Cardiac septum (tissue), 1 donor: ENCODE measurements at regions of chr7 and their contacts with region 1.

Region 1: DNA sequence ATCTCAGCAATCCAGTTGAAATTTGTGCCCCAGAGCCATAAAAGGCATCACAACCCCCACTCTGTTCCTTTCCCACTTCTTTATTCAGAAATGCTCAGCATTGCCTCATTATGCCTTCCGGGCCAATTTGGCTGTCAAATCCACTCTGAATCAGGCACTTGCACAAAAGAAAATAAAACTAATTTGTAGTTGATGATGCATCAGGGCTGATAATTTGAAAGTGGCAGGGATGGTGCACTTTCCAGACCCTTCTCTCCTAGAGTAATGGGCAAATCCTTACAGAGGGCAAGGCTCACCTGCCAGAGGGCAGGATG is 147.9 kb upstream of the PDE1C start:
- DNase-seq: peak; percentile 31

Region 2: DNA sequence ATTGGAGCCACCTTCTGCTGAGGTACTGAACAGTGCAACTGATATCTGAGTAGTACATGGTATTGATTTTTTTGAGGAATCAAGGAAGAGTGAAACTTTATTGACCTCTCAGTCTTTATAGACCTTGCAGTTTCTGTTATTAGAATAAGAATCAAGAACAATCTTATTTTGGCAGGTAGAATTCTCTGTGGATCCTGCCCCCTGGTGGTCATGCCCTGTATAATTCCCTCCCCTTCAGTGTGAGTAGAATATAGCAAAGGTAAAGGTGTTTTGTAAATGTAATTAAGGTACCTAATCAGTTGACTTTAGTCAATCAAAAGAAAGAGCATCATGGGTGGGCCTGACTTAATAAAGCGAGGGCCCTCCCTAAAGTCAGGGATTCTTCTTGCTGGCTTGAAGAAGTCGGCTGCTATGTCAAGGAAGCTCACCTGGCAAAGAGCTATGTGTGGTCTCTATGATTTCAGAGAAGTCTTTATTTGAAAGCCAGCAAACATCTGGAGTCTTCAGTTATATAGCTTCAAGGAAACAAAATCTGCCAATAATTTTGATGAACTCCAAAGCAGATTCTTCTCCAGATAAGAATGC is 129.2 kb after region 1 on chr7:
- intact Hi-C with region 1: loop called (anchors 5 kb)
- DNase-seq: no peak